ENCODE measurements at regions of chr3 and their contacts with region 1.

Region 1: GRCh38 chr3:98022978-98023820 is 11.9 kb downstream of the GABRR3 start:
- DNase-seq: peak; percentile 97
- H3K4me3 ChIP-seq: no peak overlapping the region
- H3K27ac ChIP-seq: no peak overlapping the region
- H3K4me1 ChIP-seq: peaks cover 0 to 4% (median 0%) of the 10 kb centered on the region in 4 donors
- H3K27me3 ChIP-seq: peaks cover 0 to 5% (median 2%) of the 10 kb centered on the region in 4 donors
- CTCF ChIP-seq: peak; percentile 90 to 98 (median 91)
- EP300 ChIP-seq: no peak
- POLR2A ChIP-seq: no peak

Region 2: GRCh38 chr3:97793420-97794019 is 229.7 kb before region 1 on chr3:
- intact Hi-C with region 1: loop called (anchors 1 kb)
- DNase-seq: no peak
- H3K4me3 ChIP-seq: no peak overlapping the region
- H3K27ac ChIP-seq: no peak overlapping the region
- H3K4me1 ChIP-seq: no peaks in the 10 kb centered on the region
- H3K27me3 ChIP-seq: no peaks in the 10 kb centered on the region
- CTCF ChIP-seq: peak; percentile 67 to 81 (median 78)
- EP300 ChIP-seq: no peak
- POLR2A ChIP-seq: no peak

Region 3: GRCh38 chr3:97871801-97872524 is 151.2 kb before region 1 on chr3:
- intact Hi-C with region 1: no loop called
- DNase-seq: no peak
- H3K4me3 ChIP-seq: no peak overlapping the region
- H3K27ac ChIP-seq: peak overlapping the region in 2 of 4 donors; percentile 3 to 14
- H3K4me1 ChIP-seq: peaks cover 0 to 4% (median 0%) of the 10 kb centered on the region in 4 donors
- H3K27me3 ChIP-seq: no peaks in the 10 kb centered on the region
- CTCF ChIP-seq: no peak
- EP300 ChIP-seq: no peak
- POLR2A ChIP-seq: no peak

Region 4: GRCh38 chr3:97971677-97972567 is 51.3 kb before region 1 on chr3 and contains the start of gene RIOX2:
- intact Hi-C with region 1: loop called (anchors 5 kb)
- DNase-seq: no peak
- H3K4me3 ChIP-seq: peak within 1 kb of the TSS; percentile 85 to 92 (median 89)
- H3K27ac ChIP-seq: peak within 1 kb of the TSS; percentile 83 to 91 (median 86)
- H3K4me1 ChIP-seq: peaks cover 12 to 35% (median 27%) of the 10 kb centered on the region in 4 donors
- H3K27me3 ChIP-seq: no peaks in the 10 kb centered on the region
- CTCF ChIP-seq: peak in 2 of 3 experiments; percentile 11 to 16
- EP300 ChIP-seq: no peak
- POLR2A ChIP-seq: peak; percentile 56
- total RNA-seq, gene RIOX2: 19.5 to 24.2 (median 21.7) TPM

Region 5: GRCh38 chr3:98630416-98630815 is 607.2 kb after region 1 on chr3:
- intact Hi-C with region 1: no loop called
- DNase-seq: no peak
- H3K4me3 ChIP-seq: no peak overlapping the region
- H3K27ac ChIP-seq: no peak overlapping the region
- H3K4me1 ChIP-seq: no peaks in the 10 kb centered on the region
- H3K27me3 ChIP-seq: no peaks in the 10 kb centered on the region
- CTCF ChIP-seq: no peak
- EP300 ChIP-seq: no peak
- POLR2A ChIP-seq: no peak